GM12878 (cell line): ENCODE measurements at regions of chr7 and their contacts with region 1.

Region 1: GRCh38 chr7:70856866-70857630 is 274.9 kb upstream of the GALNT17 start:
- DNase-seq: peak; percentile 12
- ATAC-seq: peak; percentile 66
- H3K4me3 ChIP-seq: no peak overlapping the region
- H3K27ac ChIP-seq: no peak overlapping the region
- H3K4me1 ChIP-seq: no peaks in the 10 kb centered on the region
- H3K27me3 ChIP-seq: no peaks in the 10 kb centered on the region
- CTCF ChIP-seq: peak; percentile 75 to 82 (median 79)
- EP300 ChIP-seq: no peak
- POLR2A ChIP-seq: no peak
- RAD21 ChIP-seq: peak; percentile 95

Region 2: GRCh38 chr7:70619130-70619529 is 237.9 kb before region 1 on chr7:
- CTCF ChIA-PET with region 1: no interaction called
- POLR2A ChIA-PET with region 1: no interaction called
- RAD21 ChIA-PET with region 1: no interaction called
- SMC1A ChIA-PET with region 1: no interaction called
- in situ Hi-C with region 1: no loop called
- intact Hi-C with region 1: no loop called
- DNase-seq: no peak
- ATAC-seq: no peak
- H3K4me3 ChIP-seq: no peak overlapping the region
- H3K27ac ChIP-seq: no peak overlapping the region
- H3K4me1 ChIP-seq: no peaks in the 10 kb centered on the region
- H3K27me3 ChIP-seq: no peaks in the 10 kb centered on the region
- CTCF ChIP-seq: no peak
- EP300 ChIP-seq: no peak
- POLR2A ChIP-seq: no peak
- RAD21 ChIP-seq: no peak

Region 3: GRCh38 chr7:70829221-70830059 is 27.6 kb before region 1 on chr7:
- CTCF ChIA-PET with region 1: interaction called, 14 read pairs
- POLR2A ChIA-PET with region 1: no interaction called
- RAD21 ChIA-PET with region 1: interaction called, 4 read pairs
- SMC1A ChIA-PET with region 1: interaction called, 7 read pairs
- in situ Hi-C with region 1: no loop called
- intact Hi-C with region 1: no loop called
- DNase-seq: no peak
- ATAC-seq: peak; percentile 92
- H3K4me3 ChIP-seq: peak overlapping the region; percentile 27; the same call in 1 of the 2 replicates
- H3K27ac ChIP-seq: no peak overlapping the region
- H3K4me1 ChIP-seq: peaks cover 5% of the 10 kb centered on the region
- H3K27me3 ChIP-seq: no peaks in the 10 kb centered on the region
- CTCF ChIP-seq: peak; percentile 79 to 86 (median 83)
- EP300 ChIP-seq: no peak
- POLR2A ChIP-seq: no peak
- RAD21 ChIP-seq: peak; percentile 75

Region 4: GRCh38 chr7:70923181-70923845 is 66.3 kb after region 1 on chr7:
- CTCF ChIA-PET with region 1: no interaction called
- POLR2A ChIA-PET with region 1: no interaction called
- RAD21 ChIA-PET with region 1: no interaction called
- SMC1A ChIA-PET with region 1: no interaction called
- in situ Hi-C with region 1: no loop called
- intact Hi-C with region 1: no loop called
- DNase-seq: no peak
- ATAC-seq: no peak
- H3K4me3 ChIP-seq: no peak overlapping the region
- H3K27ac ChIP-seq: no peak overlapping the region
- H3K4me1 ChIP-seq: no peaks in the 10 kb centered on the region
- H3K27me3 ChIP-seq: no peaks in the 10 kb centered on the region
- CTCF ChIP-seq: no peak
- EP300 ChIP-seq: no peak
- POLR2A ChIP-seq: no peak
- RAD21 ChIP-seq: no peak

Region 5: DNA sequence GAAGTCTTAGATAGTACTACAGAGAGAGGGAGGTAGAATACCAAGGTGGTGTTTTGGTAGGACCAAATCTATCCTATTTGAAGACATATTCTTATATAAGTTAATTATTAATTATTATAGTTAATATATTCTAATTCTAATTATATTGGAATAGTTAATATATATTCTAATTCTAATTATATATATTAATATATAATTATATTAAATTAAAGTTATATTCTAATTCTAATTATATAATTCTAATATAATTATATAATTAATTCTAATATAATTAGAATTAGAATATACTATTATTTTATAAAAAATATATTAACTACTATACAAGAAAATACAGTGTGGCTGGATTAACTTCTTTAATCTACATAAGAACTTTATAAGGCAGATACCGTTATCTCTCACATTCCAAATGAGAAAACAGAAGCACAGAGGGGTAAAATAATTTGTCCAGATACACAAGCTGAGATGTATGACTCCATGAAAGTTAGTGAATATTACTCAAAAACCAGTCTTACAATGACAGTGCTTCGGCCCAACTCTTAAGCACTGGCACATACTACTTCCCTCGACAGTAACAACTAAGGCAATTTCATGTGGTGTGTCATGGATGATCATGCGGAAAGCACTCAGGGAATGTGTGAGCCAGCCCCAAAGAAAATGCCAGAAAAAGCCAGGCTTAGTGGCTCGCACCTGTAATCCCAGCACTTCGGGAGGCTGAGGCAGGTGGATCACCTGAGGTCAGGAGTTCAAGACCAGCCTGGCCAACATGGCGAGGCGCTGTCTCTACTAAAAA is 1928.3 kb after region 1 on chr7:
- CTCF ChIA-PET with region 1: no interaction called
- POLR2A ChIA-PET with region 1: no interaction called
- RAD21 ChIA-PET with region 1: no interaction called
- SMC1A ChIA-PET with region 1: no interaction called
- in situ Hi-C with region 1: loop called (anchors 25 kb)
- intact Hi-C with region 1: no loop called
- DNase-seq: no peak
- ATAC-seq: no peak
- H3K4me3 ChIP-seq: no peak overlapping the region
- H3K27ac ChIP-seq: no peak overlapping the region
- H3K4me1 ChIP-seq: no peaks in the 10 kb centered on the region
- H3K27me3 ChIP-seq: no peaks in the 10 kb centered on the region
- CTCF ChIP-seq: no peak
- EP300 ChIP-seq: no peak
- POLR2A ChIP-seq: no peak
- RAD21 ChIP-seq: no peak